ENCODE measurements at regions of chr5 and their contacts with region 1.

Region 1: DNA sequence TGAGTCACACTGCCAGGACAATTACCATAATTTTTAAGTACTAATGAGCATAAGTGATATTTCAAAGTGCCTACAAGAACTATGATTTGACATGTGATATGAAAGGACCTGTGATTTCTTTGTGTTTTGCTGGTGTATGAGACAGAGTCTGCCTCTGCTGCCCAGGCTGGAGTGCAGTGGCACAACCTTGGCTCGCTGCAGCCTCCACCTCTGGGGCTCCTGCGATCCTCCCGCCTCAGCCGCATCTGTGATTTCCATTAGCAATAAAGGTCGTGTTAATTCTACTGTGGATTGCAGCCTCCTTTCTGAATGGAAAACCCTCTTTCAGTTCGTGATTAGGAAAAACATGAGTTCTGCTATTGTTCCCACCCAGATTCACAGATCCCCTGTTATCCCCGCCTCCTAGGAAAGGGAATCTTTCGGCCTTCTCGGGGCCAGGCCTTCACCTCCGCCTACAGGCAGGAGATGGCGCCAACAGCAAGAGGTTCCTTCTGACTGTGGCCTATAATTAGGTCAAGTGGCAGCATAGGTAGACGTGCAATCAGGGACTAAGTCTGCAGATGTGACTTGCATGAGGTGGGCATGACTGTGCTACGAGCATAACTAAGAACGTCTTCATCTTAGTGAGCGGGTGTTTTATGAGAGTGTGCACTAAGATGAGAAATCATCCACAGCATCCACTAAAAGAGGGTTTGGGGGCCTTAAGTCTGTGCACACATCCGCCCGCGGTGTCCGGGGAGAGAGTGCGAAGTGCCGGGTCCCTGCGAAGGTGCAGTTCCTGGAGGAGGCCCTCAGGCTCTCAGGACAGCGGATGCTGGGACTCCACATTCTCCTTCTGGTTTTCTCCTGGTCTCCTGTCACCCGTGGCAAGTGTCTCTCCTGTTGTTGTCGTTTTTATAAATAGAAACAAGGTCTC is 23.1 kb downstream of the TRIM7 start:
- DNase-seq: peak; percentile 65 to 82
- ATAC-seq: peak; percentile 88

Region 2: GRCh38 chr5:181121659-181122561 is 60.0 kb before region 1 on chr5:
- intact Hi-C with region 1: no loop called
- DNase-seq: no peak
- ATAC-seq: no peak

Region 3: GRCh38 chr5:181243512-181244343 is 61.8 kb after region 1 on chr5 and contains the start of gene RACK1:
- intact Hi-C with region 1: loop called in 1 of 2 experiments (anchors 10 kb)
- DNase-seq: peak; percentile 87 to 91
- ATAC-seq: peak; percentile 66
- total RNA-seq, gene RACK1: 1,192 to 1,207 TPM